Psoas muscle (tissue), 8 donors: ENCODE measurements at regions of chr10 and their contacts with region 1.

Region 1: DNA sequence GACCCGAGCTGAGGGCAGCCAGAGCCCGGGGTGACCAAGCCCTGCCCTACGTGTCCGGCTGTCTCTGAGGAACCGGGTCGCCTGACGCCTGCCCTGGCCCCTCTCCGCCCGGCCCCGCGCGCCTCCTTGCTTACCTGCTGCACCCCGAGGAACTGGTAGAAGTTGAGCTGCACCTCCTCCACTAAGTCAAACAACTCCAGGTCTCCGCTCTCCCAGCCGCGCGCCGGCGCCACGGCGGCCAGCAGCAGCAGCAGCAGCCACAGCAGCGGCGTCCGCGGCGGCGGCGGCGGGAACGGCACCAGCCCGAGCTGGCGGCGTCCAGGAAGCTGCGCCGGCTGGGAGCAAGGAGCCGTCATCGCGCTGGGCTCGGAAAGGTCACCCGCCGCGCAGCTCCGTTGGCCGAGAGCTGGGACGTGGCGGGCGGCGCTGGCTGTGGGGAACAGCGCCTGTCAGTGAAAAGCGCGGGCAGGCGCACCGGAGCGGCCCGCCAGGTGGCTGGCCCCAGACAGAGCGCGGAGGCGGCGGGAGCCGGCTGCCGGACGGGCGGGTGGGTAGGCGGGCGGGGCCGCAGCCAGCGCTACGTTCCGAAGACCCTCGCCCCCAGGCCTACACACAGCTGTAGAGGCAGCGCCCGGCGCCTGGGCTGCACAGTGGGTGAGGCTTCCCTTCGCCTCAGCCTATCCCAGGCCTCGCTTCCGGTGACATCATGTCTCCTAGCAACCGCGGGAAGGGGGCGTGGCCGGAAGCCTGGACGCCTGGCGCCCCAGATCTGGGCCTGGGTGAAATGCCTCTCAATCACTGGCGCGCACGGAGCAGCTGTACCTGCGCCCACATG is at the start of gene DNAJC1:
- DNase-seq: peak; percentile 99
- ATAC-seq: peak; percentile 97 to 99 (median 98)
- H3K4me3 ChIP-seq: peak within 1 kb of the TSS; percentile 78
- H3K27ac ChIP-seq: peak within 1 kb of the TSS; percentile 94
- H3K4me1 ChIP-seq: peaks cover 12% of the 10 kb centered on the region
- H3K27me3 ChIP-seq: no peaks in the 10 kb centered on the region
- CTCF ChIP-seq: no peak
- total RNA-seq, gene DNAJC1: 6.7 to 18.8 (median 11.3) TPM

Region 2: DNA sequence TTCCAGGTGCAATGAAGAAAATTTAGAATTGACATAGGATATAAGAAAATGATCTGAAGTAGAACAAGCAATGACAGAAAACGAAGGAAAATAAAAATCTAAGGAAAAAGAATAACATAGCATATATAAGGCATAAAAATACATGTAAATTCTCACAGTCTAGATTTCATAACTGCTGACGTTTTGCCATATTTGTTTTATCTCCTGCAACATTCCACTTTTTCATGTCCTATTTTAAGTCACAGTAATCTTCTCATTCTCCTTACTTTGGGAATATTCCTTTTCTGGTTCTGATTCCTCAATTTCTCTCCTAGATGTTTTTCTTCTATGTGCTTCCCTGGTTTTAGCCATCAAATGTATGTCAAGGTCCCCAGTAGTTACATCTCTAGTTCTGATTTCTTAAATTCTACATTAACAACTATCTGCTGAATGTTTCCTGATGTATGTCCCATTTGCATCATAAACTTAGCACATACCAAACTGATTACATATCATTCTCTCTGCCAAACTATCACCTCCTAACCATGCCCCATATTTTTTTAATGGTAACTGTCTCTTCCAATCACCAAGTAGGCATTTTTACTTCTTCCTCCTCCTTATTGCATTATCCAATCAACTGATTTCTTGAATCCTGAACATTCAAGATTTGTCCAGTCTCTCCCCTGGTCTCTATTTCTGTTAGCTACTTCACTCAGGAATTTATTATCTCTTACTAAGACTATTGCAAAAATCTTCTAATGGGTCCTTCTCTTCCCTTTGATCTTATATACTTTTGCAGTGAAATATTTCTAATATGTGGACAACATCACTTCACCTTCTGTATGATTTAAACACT is 171.1 kb before region 1 on chr10:
- intact Hi-C with region 1: no loop called
- DNase-seq: no peak
- ATAC-seq: no peak
- H3K4me3 ChIP-seq: no peak overlapping the region
- H3K27ac ChIP-seq: no peak overlapping the region
- H3K4me1 ChIP-seq: no peaks in the 10 kb centered on the region
- H3K27me3 ChIP-seq: no peaks in the 10 kb centered on the region
- CTCF ChIP-seq: no peak

Region 3: DNA sequence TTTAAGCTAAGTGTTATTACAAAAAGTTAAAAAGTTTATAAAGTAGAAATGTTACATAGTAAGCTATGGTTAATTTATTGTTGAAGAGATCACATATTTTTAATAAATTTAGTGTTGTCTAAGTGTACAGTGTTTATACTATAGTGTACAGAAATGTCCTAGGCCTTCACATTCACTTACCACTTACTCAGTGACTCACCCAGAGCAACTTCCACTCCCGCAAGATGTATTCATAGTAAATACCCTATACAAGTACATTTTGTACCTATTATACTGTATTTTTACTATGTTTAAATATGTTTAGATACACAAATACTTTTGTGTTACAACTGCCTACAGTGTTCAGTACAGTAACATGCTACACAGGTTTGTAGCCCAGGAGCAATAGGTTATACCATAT is 69.0 kb before region 1 on chr10:
- intact Hi-C with region 1: no loop called
- DNase-seq: no peak
- ATAC-seq: no peak
- H3K4me3 ChIP-seq: no peak overlapping the region
- H3K27ac ChIP-seq: no peak overlapping the region
- H3K4me1 ChIP-seq: no peaks in the 10 kb centered on the region
- H3K27me3 ChIP-seq: peaks cover 0 to 1% (median 0%) of the 10 kb centered on the region in 3 donors
- CTCF ChIP-seq: no peak

Region 4: GRCh38 chr10:22228943-22229801 is 225.9 kb after region 1 on chr10:
- intact Hi-C with region 1: loop called (anchors 5 to 10 kb)
- DNase-seq: peak; percentile 83 to 92
- ATAC-seq: peak; percentile 98 to 99 (median 98)
- H3K4me3 ChIP-seq: peak overlapping the region; percentile 82
- H3K27ac ChIP-seq: peak overlapping the region; percentile 91
- H3K4me1 ChIP-seq: no peaks in the 10 kb centered on the region
- H3K27me3 ChIP-seq: no peaks in the 10 kb centered on the region
- CTCF ChIP-seq: no peak

Region 5: GRCh38 chr10:22427890-22428571 is 424.7 kb after region 1 on chr10:
- intact Hi-C with region 1: loop called in 1 of 2 experiments (anchors 5 kb)
- DNase-seq: no peak
- ATAC-seq: peak; percentile 67 to 95 (median 92)
- H3K4me3 ChIP-seq: no peak overlapping the region
- H3K27ac ChIP-seq: no peak overlapping the region
- H3K4me1 ChIP-seq: peaks cover 19% of the 10 kb centered on the region
- H3K27me3 ChIP-seq: no peaks in the 10 kb centered on the region
- CTCF ChIP-seq: no peak

Region 6: DNA sequence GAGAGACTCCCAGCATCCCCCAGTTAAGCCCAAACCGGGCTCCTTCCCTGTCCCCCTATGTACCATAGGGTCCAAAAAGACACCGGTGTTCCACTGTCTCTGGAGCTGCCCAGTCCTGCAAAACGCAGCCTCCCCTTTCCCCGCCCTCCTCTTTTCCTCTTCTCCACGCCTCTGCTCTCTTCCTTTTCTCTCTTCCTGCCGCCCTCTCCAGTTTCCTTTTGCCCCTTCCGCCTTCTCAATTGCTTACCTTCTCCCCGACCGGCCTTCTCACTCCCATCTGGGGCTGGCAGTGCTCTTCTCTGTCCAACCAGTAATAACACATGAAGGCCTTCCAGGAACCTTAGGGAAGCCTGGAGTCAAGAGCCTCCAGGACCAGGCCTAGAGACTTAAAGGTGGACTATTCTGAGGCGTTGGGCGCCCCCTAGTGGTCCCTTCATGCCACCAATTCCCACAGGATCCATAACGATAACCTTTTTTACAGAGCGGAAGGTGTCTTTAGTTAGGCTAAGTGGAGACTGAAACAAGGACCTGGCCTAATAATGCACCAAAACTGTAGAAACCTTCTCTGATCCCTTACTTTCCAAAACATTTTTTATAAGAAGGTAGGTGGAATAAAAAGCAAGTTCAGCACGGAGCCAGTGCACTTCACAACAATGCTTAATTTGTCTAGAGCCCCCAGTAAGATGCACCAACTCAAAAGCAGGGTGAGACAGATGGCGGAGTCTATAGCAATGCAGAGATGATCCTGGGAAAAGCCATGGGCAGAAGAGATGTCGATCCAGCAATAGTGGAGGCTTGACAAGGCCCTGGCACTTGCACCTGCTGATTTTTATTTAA is 1064.9 kb after region 1 on chr10:
- intact Hi-C with region 1: loop called (anchors 5 to 10 kb)
- DNase-seq: peak; percentile 72 to 79
- ATAC-seq: peak; percentile 67 to 77 (median 72)
- H3K4me3 ChIP-seq: no peak overlapping the region
- H3K27ac ChIP-seq: no peak overlapping the region
- H3K4me1 ChIP-seq: peaks cover 35% of the 10 kb centered on the region
- H3K27me3 ChIP-seq: no peaks in the 10 kb centered on the region
- CTCF ChIP-seq: peak; percentile 89